Transverse colon (tissue), 4 donors: ENCODE measurements at regions of chr22 and their contacts with region 1.

Region 1: DNA sequence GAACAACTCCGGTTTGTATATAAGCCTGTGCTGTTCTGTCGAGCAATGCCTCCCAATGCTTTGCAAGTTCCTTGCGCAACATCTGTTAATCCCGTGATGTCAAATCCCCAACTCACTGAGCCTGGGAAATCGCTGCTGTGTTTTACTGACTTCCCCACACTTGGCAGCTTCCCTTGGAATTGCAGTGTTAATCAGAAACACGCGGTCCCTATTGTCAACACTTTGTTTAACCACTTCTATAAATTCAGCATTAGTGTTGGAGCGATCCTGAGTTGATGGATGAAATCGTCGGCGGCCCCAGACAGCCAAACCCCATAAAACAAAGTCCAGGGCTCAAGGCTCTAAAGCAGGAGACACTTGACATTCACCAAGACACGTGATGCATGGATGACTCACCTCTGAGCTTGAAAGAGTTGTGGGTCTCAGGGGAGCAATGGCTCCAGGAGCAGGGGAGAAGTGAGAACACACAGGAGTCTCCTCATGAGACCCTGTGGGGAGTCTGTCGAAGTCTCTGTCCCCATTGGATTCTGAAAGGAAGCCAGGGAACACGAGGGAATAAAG is 555.3 kb downstream of the MIAT start:
- DNase-seq: peak; percentile 69
- H3K4me3 ChIP-seq: no peak overlapping the region
- H3K27ac ChIP-seq: peak overlapping the region; percentile 54 to 74 (median 69)
- H3K4me1 ChIP-seq: peaks cover 0 to 13% (median 2%) of the 10 kb centered on the region in 4 donors
- H3K27me3 ChIP-seq: peaks cover 3% of the 10 kb centered on the region
- CTCF ChIP-seq: no peak
- EP300 ChIP-seq: peak; percentile 79
- POLR2A ChIP-seq: no peak

Region 2: GRCh38 chr22:27107824-27108223 is 104.9 kb before region 1 on chr22:
- in situ Hi-C with region 1: loop called in 1 of 4 experiments (anchors 25 kb)
- intact Hi-C with region 1: loop called (anchors 5 kb)
- DNase-seq: peak; percentile 45
- H3K4me3 ChIP-seq: no peak overlapping the region
- H3K27ac ChIP-seq: peak overlapping the region; percentile 36 to 83 (median 67)
- H3K4me1 ChIP-seq: peaks cover 10 to 26% (median 14%) of the 10 kb centered on the region in 4 donors
- H3K27me3 ChIP-seq: no peaks in the 10 kb centered on the region
- CTCF ChIP-seq: no peak
- EP300 ChIP-seq: no peak
- POLR2A ChIP-seq: no peak

Region 3: DNA sequence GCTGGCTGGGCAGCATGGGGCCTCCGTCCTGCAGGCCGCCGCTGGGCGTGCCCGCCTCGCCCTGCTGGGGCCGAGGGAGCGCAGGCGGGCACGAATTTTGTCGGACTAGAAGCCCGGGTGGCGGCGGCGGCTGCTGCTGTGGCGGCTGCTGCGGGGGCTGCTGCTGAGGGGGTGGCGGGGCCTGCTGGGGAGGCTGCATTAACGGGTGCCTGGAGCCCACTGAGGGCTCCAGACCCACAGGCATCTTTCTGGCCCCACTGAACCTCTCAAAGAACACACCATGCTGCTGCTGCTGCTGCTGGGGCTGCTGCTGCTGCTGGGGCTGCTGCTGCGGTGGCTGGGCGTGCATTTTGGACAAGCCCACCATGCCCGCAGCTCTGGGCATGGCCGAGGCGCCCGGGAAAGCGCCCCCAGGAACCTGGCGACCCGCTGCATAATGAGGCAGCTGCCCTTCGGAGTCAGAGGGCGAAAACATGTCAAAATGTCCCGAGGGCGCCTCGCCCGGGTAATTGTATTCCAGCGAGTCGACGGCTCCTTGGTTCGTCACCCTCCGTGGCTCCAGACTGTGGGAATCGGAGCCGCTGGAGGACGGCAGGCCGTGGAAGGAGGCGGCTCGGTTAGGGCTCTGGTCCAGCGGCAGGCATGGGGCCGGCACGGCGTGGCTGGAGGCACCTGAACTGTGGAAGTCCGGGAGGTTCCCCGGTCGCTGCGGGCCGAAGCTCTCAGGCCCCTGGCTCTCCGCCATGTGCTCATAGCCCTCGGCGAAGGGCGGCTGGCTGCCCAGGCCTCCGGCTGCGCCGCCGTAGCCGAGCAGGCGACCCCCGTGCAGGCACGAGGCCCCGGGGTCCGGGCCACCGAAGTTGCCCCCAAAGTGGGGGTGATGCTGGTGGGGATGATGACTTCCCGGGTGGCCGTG is 586.9 kb after region 1 on chr22:
- in situ Hi-C with region 1: no loop called
- intact Hi-C with region 1: loop called (anchors 10 kb)
- DNase-seq: no peak
- H3K4me3 ChIP-seq: peak overlapping the region in 3 of 4 donors; percentile 51 to 69 (median 60)
- H3K27ac ChIP-seq: peak overlapping the region in 3 of 4 donors; percentile 76 to 85 (median 83)
- H3K4me1 ChIP-seq: peaks cover 2 to 34% (median 20%) of the 10 kb centered on the region in 4 donors
- H3K27me3 ChIP-seq: peaks cover 76% of the 10 kb centered on the region
- CTCF ChIP-seq: no peak
- EP300 ChIP-seq: no peak
- POLR2A ChIP-seq: no peak